ENCODE measurements at regions of chr6 and their contacts with region 1.

Region 1: GRCh38 chr6:112043032-112044007 is 10.6 kb upstream of the CCN6 start:
- DNase-seq: peak; percentile 94
- H3K4me3 Mint-ChIP-seq: peak overlapping the region; percentile 91
- H3K27ac Mint-ChIP-seq: peak overlapping the region; percentile 97
- H3K4me1 Mint-ChIP-seq: peaks cover 16% of the 10 kb centered on the region
- H3K27me3 Mint-ChIP-seq: peaks cover 4% of the 10 kb centered on the region

Region 2: GRCh38 chr6:111642463-111643158 is 400.7 kb before region 1 on chr6:
- CTCF ChIA-PET with region 1: interaction called, 11 read pairs
- DNase-seq: peak; percentile 64
- H3K4me3 Mint-ChIP-seq: no peak overlapping the region
- H3K27ac Mint-ChIP-seq: no peak overlapping the region
- H3K4me1 Mint-ChIP-seq: peaks cover 5% of the 10 kb centered on the region
- H3K27me3 Mint-ChIP-seq: no peaks in the 10 kb centered on the region

Region 3: GRCh38 chr6:111997078-111997852 is 46.1 kb before region 1 on chr6:
- CTCF ChIA-PET with region 1: interaction called, 11 read pairs
- DNase-seq: peak; percentile 87
- H3K4me3 Mint-ChIP-seq: peak overlapping the region; percentile 29
- H3K27ac Mint-ChIP-seq: peak overlapping the region; percentile 58
- H3K4me1 Mint-ChIP-seq: peaks cover 45% of the 10 kb centered on the region
- H3K27me3 Mint-ChIP-seq: no peaks in the 10 kb centered on the region

Region 4: GRCh38 chr6:112029045-112029822 is 14.1 kb before region 1 on chr6:
- CTCF ChIA-PET with region 1: interaction called, 51 read pairs
- DNase-seq: peak; percentile 72
- H3K4me3 Mint-ChIP-seq: no peak overlapping the region
- H3K27ac Mint-ChIP-seq: peak overlapping the region; percentile 98
- H3K4me1 Mint-ChIP-seq: peaks cover 64% of the 10 kb centered on the region
- H3K27me3 Mint-ChIP-seq: no peaks in the 10 kb centered on the region

Measured in activated naive CD4-positive, alpha-beta T cell treated with anti-CD3 and anti-CD28 coated beads, Interleukin-2, amount 10 ng/mL, durations not matched to agents 7 days and 5 days (primary cell).